ENCODE measurements at regions of chr15 and their contacts with region 1.

Region 1: GRCh38 chr15:52679232-52680040 is at the start of gene ATOSA:
- DNase-seq: peak; percentile 94
- H3K4me3 Mint-ChIP-seq: peak within 1 kb of the TSS; percentile 100
- H3K27ac Mint-ChIP-seq: peak within 1 kb of the TSS; percentile 100
- H3K4me1 Mint-ChIP-seq: peaks cover 50% of the 10 kb centered on the region
- H3K27me3 Mint-ChIP-seq: peaks cover 3% of the 10 kb centered on the region
- total RNA-seq, gene ATOSA: 44.9 to 46.6 TPM

Region 2: DNA sequence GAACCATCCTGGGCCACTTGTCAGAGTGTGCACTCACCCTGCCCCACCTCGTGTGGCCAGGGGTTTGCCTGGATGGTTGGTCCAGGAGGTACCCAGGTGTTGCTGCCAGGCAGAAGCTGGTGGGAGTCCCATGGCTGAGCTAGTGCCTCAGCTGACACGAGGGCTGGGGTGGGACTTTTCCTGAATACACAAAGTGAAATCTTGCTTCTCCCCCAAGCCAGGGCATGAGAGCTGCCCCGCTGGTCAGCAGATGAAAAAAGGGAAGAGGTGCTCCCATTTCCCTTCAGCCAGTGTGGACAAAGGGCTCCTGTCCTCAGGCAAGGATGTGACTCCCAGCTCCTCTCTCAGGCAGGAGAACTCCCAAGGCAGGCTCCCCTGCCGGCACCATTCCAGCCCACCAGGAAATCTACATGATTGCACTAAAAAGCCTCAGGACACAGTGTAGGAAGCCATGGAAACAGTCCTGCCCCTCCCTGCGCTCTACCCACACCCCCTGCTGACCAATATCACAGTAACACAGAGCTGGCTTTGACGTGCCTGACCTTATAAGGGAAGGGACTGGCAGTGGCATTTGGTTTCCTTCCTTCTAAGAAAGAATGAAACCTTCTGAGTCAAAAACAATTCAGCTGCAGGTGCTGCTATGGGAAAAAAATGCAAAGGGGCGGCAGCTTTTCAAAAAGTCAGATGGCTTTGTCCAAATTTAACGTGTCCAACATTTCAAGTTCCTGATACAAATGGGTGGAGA is 417.8 kb before region 1 on chr15:
- CTCF ChIA-PET with region 1: no interaction called
- POLR2A ChIA-PET with region 1: interaction called, 12 read pairs
- DNase-seq: peak; percentile 82
- H3K4me3 Mint-ChIP-seq: no peak overlapping the region
- H3K27ac Mint-ChIP-seq: peak overlapping the region; percentile 89
- H3K4me1 Mint-ChIP-seq: peaks cover 60% of the 10 kb centered on the region
- H3K27me3 Mint-ChIP-seq: no peaks in the 10 kb centered on the region

Region 3: GRCh38 chr15:52466134-52466701 is 213.2 kb before region 1 on chr15:
- CTCF ChIA-PET with region 1: interaction called, 4 read pairs
- POLR2A ChIA-PET with region 1: interaction called, 10 read pairs
- DNase-seq: peak; percentile 67
- H3K4me3 Mint-ChIP-seq: no peak overlapping the region
- H3K27ac Mint-ChIP-seq: peak overlapping the region; percentile 52
- H3K4me1 Mint-ChIP-seq: peaks cover 50% of the 10 kb centered on the region
- H3K27me3 Mint-ChIP-seq: no peaks in the 10 kb centered on the region

Region 4: DNA sequence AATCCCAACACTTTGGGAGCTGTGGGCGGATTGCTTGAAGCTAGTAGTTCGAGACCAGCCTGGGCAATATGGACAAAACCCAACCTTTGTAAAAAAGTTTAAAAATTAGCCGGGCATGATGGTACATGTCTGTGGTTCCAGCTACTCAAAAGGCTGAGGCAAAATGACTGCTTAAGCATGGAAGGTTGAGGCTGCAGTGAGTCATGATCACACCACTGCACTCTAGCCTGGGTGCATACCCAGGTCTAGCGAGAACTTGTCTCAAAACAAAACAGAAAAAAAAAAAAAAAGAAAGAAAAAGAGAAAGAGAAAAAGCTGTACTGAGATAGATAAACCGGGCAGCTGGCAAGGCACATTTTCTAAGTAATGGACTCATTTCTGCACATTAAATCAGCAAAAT is 121.2 kb before region 1 on chr15:
- CTCF ChIA-PET with region 1: no interaction called
- POLR2A ChIA-PET with region 1: interaction called, 10 read pairs
- DNase-seq: peak; percentile 77
- H3K4me3 Mint-ChIP-seq: peak overlapping the region; percentile 58
- H3K27ac Mint-ChIP-seq: peak overlapping the region; percentile 89
- H3K4me1 Mint-ChIP-seq: peaks cover 64% of the 10 kb centered on the region
- H3K27me3 Mint-ChIP-seq: no peaks in the 10 kb centered on the region

Region 5: GRCh38 chr15:52658955-52659354 is 20.5 kb before region 1 on chr15:
- CTCF ChIA-PET with region 1: interaction called, 4 read pairs
- POLR2A ChIA-PET with region 1: interaction called, 10 read pairs
- DNase-seq: peak; percentile 20
- H3K4me3 Mint-ChIP-seq: no peak overlapping the region
- H3K27ac Mint-ChIP-seq: peak overlapping the region; percentile 60
- H3K4me1 Mint-ChIP-seq: peaks cover 36% of the 10 kb centered on the region
- H3K27me3 Mint-ChIP-seq: no peaks in the 10 kb centered on the region

Region 6: DNA sequence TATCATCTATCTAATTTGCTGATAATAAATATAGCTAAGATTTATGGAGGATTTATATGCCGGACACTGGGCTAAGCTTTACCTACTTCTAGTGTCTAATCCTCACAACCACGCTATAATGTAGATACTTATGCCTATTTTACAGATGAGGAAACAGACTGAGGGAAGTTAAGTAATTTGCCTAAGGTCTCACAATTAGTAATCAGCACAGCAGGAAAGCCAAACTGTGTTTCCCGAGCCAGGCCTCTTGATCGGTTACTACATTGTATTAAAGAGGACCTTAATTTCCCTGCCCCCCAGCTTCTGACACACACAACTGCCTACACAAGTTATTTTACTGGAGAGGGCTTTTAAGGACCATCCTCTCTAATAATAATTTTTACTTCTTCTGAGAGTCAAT is 69.8 kb after region 1 on chr15:
- CTCF ChIA-PET with region 1: no interaction called
- POLR2A ChIA-PET with region 1: no interaction called
- DNase-seq: no peak
- H3K4me3 Mint-ChIP-seq: no peak overlapping the region
- H3K27ac Mint-ChIP-seq: no peak overlapping the region
- H3K4me1 Mint-ChIP-seq: no peaks in the 10 kb centered on the region
- H3K27me3 Mint-ChIP-seq: peaks cover 38% of the 10 kb centered on the region

Measured in activated CD4-positive, alpha-beta memory T cell treated with anti-CD3 and anti-CD28 coated beads, Interleukin-2, amount 10 ng/mL, durations not matched to agents 7 days and 5 days (primary cell).